Activated B cell treated with CpG ODN at 0.5 μM for 24 hours (primary cell): ENCODE measurements at regions of chr7 and their contacts with region 1.

Region 1: DNA sequence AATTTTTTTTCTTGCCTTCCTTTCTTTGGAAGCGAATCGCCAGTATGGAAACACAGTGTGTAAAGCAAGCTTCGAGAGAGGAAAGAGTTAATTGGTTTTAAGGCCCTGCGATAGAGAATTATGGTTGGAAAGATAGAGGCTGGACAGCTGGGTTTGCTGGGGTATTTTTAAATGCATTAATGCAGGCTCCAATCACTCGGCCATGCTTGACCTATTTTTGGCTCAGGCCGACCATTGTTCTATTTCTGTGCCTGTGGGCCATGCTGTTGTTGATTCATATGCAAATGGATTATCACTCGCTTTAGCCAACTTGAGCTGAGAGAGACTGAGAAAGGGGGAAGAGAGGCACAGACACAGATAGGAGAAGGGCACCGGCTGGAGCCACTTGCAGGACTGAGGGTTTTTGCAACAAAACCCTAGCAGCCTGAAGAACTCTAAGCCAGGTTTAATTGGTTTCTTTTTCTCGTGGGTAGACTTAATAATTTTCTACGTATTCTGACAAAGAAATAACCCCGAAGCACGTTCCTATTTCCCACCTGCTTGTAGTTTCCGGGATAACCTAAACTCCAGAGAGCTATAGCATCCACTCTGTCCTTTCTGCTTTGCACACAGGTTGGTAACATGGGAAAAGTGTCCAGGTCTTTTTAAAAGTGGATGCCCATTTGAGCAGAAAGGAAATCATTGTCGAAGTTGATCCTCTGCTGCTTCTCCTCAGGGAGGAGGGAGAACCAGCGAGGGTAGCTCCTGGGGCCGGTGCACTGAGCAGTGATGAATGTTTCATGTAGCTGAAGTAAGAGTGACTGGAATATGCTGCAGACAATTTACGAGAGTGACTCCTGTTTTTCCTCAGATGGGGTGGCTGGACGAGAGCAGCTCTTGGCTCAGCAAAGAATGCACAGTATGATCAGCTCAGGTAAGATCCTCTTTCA is at the start of gene HDAC9:
- DNase-seq: peak; percentile 33
- ATAC-seq: peak; percentile 88
- H3K4me3 Mint-ChIP-seq: peak within 1 kb of the TSS; percentile 95
- H3K27ac Mint-ChIP-seq: peak within 1 kb of the TSS; percentile 95
- H3K4me1 Mint-ChIP-seq: peaks cover 53% of the 10 kb centered on the region
- H3K27me3 Mint-ChIP-seq: no peaks in the 10 kb centered on the region
- CTCF ChIP-seq: no peak
- total RNA-seq, gene HDAC9: 136 and 149 TPM in 2 replicates

Region 2: GRCh38 chr7:18276383-18276782 is 219.3 kb before region 1 on chr7:
- CTCF ChIA-PET with region 1: no interaction called
- POLR2A ChIA-PET with region 1: no interaction called
- intact Hi-C with region 1: no loop called
- DNase-seq: no peak
- ATAC-seq: no peak
- H3K4me3 Mint-ChIP-seq: no peak overlapping the region
- H3K27ac Mint-ChIP-seq: no peak overlapping the region
- H3K4me1 Mint-ChIP-seq: no peaks in the 10 kb centered on the region
- H3K27me3 Mint-ChIP-seq: no peaks in the 10 kb centered on the region
- CTCF ChIP-seq: no peak

Region 3: DNA sequence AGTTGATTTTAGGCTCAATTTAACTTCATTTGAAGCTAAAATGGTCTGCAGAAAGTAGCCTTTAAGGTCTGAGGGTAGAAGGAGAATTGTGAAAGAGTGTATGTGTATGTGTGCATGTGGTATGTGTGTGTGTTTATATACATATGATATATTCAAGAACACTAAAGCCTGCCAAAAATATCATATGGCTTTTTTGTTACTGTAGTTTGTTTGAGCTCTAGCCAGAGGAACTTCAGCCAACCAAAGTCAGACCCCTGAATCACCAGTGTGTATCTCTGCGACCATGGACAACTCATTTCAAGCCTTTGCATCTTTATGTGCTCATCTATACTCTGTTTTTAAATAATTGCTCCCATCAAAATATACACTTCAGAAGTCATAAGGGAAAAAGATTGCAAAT is 58.6 kb before region 1 on chr7:
- CTCF ChIA-PET with region 1: no interaction called
- POLR2A ChIA-PET with region 1: no interaction called
- intact Hi-C with region 1: no loop called
- DNase-seq: no peak
- ATAC-seq: no peak
- H3K4me3 Mint-ChIP-seq: no peak overlapping the region
- H3K27ac Mint-ChIP-seq: no peak overlapping the region
- H3K4me1 Mint-ChIP-seq: peaks cover 19% of the 10 kb centered on the region
- H3K27me3 Mint-ChIP-seq: no peaks in the 10 kb centered on the region
- CTCF ChIP-seq: no peak

Region 4: DNA sequence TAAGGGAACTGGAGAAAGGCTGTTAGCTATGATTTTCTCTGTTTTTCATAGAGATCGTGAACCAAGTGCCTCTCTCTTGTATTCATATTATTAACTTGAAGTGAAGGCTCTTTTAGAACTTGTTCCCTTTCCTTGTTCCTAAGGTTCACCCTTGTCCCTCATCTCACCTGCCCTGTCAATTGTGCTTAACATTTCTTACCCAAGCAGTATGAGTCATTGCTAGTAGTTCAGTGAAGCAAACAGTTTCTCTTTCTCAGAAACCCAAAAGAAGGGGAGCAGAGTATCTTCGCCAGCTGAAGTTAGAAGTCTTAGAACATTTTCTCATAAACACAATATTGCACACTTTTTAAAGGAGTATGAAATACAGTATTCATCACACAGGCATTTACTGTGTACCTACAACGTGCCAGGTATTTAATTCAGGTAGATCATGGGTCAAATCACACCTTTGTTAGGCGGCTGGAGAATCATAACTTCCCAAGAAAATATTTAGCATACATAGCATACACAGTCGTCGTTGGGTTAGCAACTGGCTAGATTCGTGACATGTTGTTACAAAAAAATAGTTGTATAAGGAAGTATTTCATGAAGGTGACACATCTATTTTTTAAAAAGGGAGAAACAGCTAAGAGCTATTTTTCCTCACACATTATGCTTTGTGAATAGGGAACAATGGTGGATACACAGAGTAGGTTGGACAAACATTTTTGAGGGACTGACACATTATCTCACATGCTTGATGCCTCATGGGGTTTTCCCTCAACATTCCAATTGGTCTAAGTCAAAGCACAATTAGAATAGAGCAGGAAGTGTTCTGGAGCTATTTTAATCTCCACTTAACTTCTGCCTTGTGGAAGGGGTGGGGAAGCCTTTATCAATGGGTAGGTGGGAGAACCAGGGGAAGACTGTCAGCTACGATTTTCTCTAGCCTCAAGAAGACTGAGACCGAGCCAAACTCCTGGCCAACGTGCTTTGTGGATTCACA is 13.1 kb after region 1 on chr7:
- CTCF ChIA-PET with region 1: interaction called, 9 read pairs
- POLR2A ChIA-PET with region 1: interaction called, 117 read pairs
- intact Hi-C with region 1: loop called (anchors 1 kb)
- DNase-seq: no peak
- ATAC-seq: peak; percentile 74
- H3K4me3 Mint-ChIP-seq: peak overlapping the region; percentile 82
- H3K27ac Mint-ChIP-seq: peak overlapping the region; percentile 99
- H3K4me1 Mint-ChIP-seq: peaks cover 89% of the 10 kb centered on the region
- H3K27me3 Mint-ChIP-seq: no peaks in the 10 kb centered on the region
- CTCF ChIP-seq: no peak

Region 5: GRCh38 chr7:18530224-18531179 is 34.8 kb after region 1 on chr7:
- CTCF ChIA-PET with region 1: interaction called, 5 read pairs
- POLR2A ChIA-PET with region 1: interaction called, 32 read pairs
- intact Hi-C with region 1: no loop called
- DNase-seq: no peak
- ATAC-seq: peak; percentile 81
- H3K4me3 Mint-ChIP-seq: peak overlapping the region; percentile 72
- H3K27ac Mint-ChIP-seq: peak overlapping the region; percentile 90
- H3K4me1 Mint-ChIP-seq: peaks cover 86% of the 10 kb centered on the region
- H3K27me3 Mint-ChIP-seq: no peaks in the 10 kb centered on the region
- CTCF ChIP-seq: no peak

Region 6: GRCh38 chr7:18590744-18591340 is 95.2 kb after region 1 on chr7:
- CTCF ChIA-PET with region 1: interaction called, 11 read pairs
- POLR2A ChIA-PET with region 1: interaction called, 3 read pairs
- intact Hi-C with region 1: no loop called
- DNase-seq: no peak
- ATAC-seq: peak; percentile 37
- H3K4me3 Mint-ChIP-seq: no peak overlapping the region
- H3K27ac Mint-ChIP-seq: peak overlapping the region; percentile 78
- H3K4me1 Mint-ChIP-seq: peaks cover 30% of the 10 kb centered on the region
- H3K27me3 Mint-ChIP-seq: no peaks in the 10 kb centered on the region
- CTCF ChIP-seq: no peak

Region 7: GRCh38 chr7:18778594-18778993 is 282.9 kb after region 1 on chr7:
- CTCF ChIA-PET with region 1: no interaction called
- POLR2A ChIA-PET with region 1: no interaction called
- intact Hi-C with region 1: no loop called
- DNase-seq: no peak
- ATAC-seq: no peak
- H3K4me3 Mint-ChIP-seq: no peak overlapping the region
- H3K27ac Mint-ChIP-seq: no peak overlapping the region
- H3K4me1 Mint-ChIP-seq: no peaks in the 10 kb centered on the region
- H3K27me3 Mint-ChIP-seq: no peaks in the 10 kb centered on the region
- CTCF ChIP-seq: no peak

Region 8: DNA sequence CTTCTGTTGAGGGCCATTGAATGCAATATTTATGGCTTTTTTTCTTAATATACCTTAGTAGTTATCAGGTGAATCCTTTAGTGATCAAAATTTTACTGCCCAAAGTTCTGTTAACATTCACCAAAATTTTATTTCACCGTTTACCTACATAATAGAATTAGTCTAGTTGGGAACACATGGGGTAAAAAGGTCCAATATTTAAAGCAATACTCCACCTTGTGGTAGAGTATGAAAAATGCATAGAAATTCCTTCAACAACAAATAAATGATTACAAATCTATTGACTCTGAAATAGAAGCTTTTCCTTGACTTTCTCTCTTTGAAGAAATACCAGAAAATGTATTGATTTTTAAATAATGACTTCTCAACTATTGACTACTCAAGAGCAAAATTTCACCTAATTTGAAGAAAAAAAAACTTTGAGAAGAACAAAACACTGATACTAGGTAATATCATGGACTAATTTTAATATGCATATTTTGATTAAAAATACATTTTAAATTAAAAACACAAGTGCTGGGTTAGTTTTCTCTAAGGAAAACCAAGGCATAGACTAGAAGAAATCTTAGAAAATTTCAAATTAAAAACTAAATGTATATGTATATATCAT is 1169.8 kb after region 1 on chr7:
- CTCF ChIA-PET with region 1: no interaction called
- POLR2A ChIA-PET with region 1: no interaction called
- intact Hi-C with region 1: loop called (anchors 10 kb)
- DNase-seq: no peak
- ATAC-seq: peak; percentile 32
- H3K4me3 Mint-ChIP-seq: no peak overlapping the region
- H3K27ac Mint-ChIP-seq: no peak overlapping the region
- H3K4me1 Mint-ChIP-seq: peaks cover 20% of the 10 kb centered on the region
- H3K27me3 Mint-ChIP-seq: no peaks in the 10 kb centered on the region
- CTCF ChIP-seq: no peak